ENCODE measurements at regions of chr6 and their contacts with region 1.

Region 1: DNA sequence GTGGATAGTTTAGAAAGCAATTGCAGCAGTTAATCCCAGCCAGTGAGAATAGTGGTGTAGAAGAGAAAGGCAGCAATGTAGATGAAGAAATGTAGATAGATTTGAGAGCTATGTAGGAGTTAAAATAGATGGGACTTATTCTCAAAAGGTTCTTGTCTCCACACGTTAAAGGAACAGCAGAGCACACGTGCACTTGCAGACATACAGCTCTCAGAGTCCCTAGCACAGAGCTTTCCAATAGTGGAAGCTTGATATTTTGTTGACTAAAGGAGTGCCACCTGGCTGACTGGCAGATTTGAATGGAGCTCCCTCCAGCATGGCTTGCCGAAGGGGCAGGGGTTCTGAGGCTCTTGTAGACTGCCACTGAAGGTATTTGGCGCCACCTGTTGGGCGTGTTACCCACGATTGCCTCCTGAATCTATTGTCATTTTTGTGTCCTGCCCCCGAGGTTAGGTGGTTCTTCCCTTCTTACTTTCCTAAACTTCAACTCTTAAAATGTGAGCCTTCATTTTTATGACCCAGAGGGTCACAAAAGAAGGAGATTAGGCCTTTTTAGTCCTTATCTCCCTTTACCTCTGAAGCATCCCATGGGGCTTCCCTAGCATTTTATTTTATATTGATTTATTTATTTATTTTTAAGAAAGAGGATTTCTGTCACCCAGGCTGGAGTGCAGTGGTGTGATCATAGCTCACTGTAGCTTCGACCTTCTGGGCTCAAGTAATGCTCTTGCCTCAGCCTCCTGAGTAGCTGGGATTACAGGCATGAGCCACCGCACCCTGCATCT is 16.4 kb downstream of the BRD2 start:
- DNase-seq: no peak
- ATAC-seq: peak; percentile 83
- H3K4me3 ChIP-seq: no peak overlapping the region
- H3K27ac ChIP-seq: no peak overlapping the region
- H3K4me1 ChIP-seq: peaks cover 7% of the 10 kb centered on the region; the same call in 1 of the 2 replicates
- H3K27me3 ChIP-seq: no peaks in the 10 kb centered on the region
- CTCF ChIP-seq: peak; percentile 79 to 97 (median 89); a peak in 5 of 6 replicates
- EP300 ChIP-seq: no peak
- POLR2A ChIP-seq: no peak
- RAD21 ChIP-seq: peak; percentile 93

Region 2: GRCh38 chr6:31351401-31352309 is 1633.1 kb before region 1 on chr6:
- CTCF ChIA-PET with region 1: no interaction called
- POLR2A ChIA-PET with region 1: no interaction called
- RAD21 ChIA-PET with region 1: no interaction called
- SMC1A ChIA-PET with region 1: no interaction called
- in situ Hi-C with region 1: no loop called
- intact Hi-C with region 1: no loop called
- DNase-seq: no peak
- ATAC-seq: peak; percentile 22
- H3K4me3 ChIP-seq: no peak overlapping the region
- H3K27ac ChIP-seq: no peak overlapping the region
- H3K4me1 ChIP-seq: peaks cover 14% of the 10 kb centered on the region
- H3K27me3 ChIP-seq: no peaks in the 10 kb centered on the region
- CTCF ChIP-seq: no peak
- EP300 ChIP-seq: no peak
- POLR2A ChIP-seq: peak; percentile 47; the same call in 1 of the 2 replicates
- RAD21 ChIP-seq: no peak

Region 3: GRCh38 chr6:32838114-32838958 is 146.5 kb before region 1 on chr6 and contains the start of gene TAP2:
- CTCF ChIA-PET with region 1: interaction called, 36 read pairs
- POLR2A ChIA-PET with region 1: interaction called, 3 read pairs
- RAD21 ChIA-PET with region 1: interaction called, 25 read pairs
- SMC1A ChIA-PET with region 1: interaction called, 50 read pairs
- in situ Hi-C with region 1: no loop called
- intact Hi-C with region 1: loop called (anchors 1 kb)
- DNase-seq: no peak
- ATAC-seq: peak; percentile 85
- H3K4me3 ChIP-seq: peak within 1 kb of the TSS; percentile 95
- H3K27ac ChIP-seq: peak within 1 kb of the TSS; percentile 75
- H3K4me1 ChIP-seq: peaks cover 60% of the 10 kb centered on the region
- H3K27me3 ChIP-seq: no peaks in the 10 kb centered on the region
- CTCF ChIP-seq: peak; percentile 89 to 97 (median 96); a peak in 5 of 6 replicates
- EP300 ChIP-seq: no peak
- POLR2A ChIP-seq: peak; percentile 86
- RAD21 ChIP-seq: peak; percentile 98
- polyA plus RNA-seq, gene TAP2: 5.3 to 6.7 TPM

Region 4: DNA sequence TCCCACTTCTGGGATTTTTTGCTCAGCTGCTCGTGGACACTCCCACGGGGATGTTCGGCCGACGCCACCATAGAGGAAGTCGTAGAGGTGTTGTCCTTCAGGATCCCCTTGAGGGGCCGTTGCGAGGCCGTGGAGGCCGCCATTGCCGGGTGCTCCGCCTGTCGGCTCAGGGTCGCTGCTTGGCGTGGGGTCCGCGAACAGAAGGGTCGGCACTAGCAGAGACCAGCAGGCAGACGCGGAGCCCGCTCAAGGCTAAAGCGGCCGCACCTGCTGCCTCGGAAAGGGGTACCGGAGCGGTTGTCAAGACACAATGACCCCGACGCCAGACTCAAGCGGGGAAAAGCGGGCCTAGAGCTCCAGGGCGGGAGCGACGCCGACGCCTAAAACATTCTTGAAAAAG is 105.1 kb before region 1 on chr6:
- CTCF ChIA-PET with region 1: interaction called, 260 read pairs
- POLR2A ChIA-PET with region 1: no interaction called
- RAD21 ChIA-PET with region 1: interaction called, 104 read pairs
- SMC1A ChIA-PET with region 1: interaction called, 184 read pairs
- in situ Hi-C with region 1: no loop called
- intact Hi-C with region 1: no loop called
- DNase-seq: no peak
- ATAC-seq: no peak
- H3K4me3 ChIP-seq: no peak overlapping the region
- H3K27ac ChIP-seq: no peak overlapping the region
- H3K4me1 ChIP-seq: 0 out of 2 replicates have a peak, but pooled peaks cover 3% of the 10 kb centered on the region
- H3K27me3 ChIP-seq: no peaks in the 10 kb centered on the region; a peak in 1 of 4 replicates
- CTCF ChIP-seq: no peak
- EP300 ChIP-seq: no peak
- POLR2A ChIP-seq: no peak
- RAD21 ChIP-seq: no peak

Region 5: DNA sequence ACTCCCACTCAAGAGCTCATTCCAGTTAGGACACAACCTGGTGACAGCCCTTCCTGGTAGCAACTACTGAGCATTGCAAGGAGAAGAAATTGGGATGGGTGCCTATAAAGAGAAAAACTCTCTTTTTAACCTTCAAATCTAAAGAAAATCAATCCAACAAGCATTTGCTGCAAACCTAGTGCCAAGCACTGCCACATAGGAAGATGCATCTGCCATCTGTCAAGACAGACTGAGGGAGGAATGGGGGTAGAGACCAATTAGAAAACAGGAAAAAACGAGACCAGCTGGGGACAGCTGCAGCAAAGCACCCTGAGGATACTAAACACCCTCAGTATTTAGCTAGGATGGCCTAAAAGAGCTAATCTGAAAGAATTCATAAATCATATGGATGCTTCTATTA is 71.8 kb before region 1 on chr6:
- CTCF ChIA-PET with region 1: interaction called, 36 read pairs
- POLR2A ChIA-PET with region 1: interaction called, 5 read pairs
- RAD21 ChIA-PET with region 1: interaction called, 8 read pairs
- SMC1A ChIA-PET with region 1: interaction called, 12 read pairs
- in situ Hi-C with region 1: no loop called
- intact Hi-C with region 1: no loop called
- DNase-seq: no peak
- ATAC-seq: no peak
- H3K4me3 ChIP-seq: no peak overlapping the region
- H3K27ac ChIP-seq: no peak overlapping the region
- H3K4me1 ChIP-seq: no peaks in the 10 kb centered on the region
- H3K27me3 ChIP-seq: no peaks in the 10 kb centered on the region
- CTCF ChIP-seq: no peak
- EP300 ChIP-seq: no peak
- POLR2A ChIP-seq: no peak
- RAD21 ChIP-seq: no peak

Region 6: GRCh38 chr6:32947552-32948465 is 37.0 kb before region 1 on chr6:
- CTCF ChIA-PET with region 1: interaction called, 367 read pairs
- POLR2A ChIA-PET with region 1: interaction called, 486 read pairs
- RAD21 ChIA-PET with region 1: interaction called, 114 read pairs
- SMC1A ChIA-PET with region 1: interaction called, 195 read pairs
- in situ Hi-C with region 1: no loop called
- intact Hi-C with region 1: loop called (anchors 2 kb)
- DNase-seq: peak; percentile 56
- ATAC-seq: peak; percentile 13; the same call in 2 of the 3 replicates
- H3K4me3 ChIP-seq: peak overlapping the region; percentile 22
- H3K27ac ChIP-seq: peak overlapping the region; percentile 59
- H3K4me1 ChIP-seq: peaks cover 55% of the 10 kb centered on the region
- H3K27me3 ChIP-seq: no peaks in the 10 kb centered on the region
- CTCF ChIP-seq: peak; percentile 69 to 88 (median 82)
- EP300 ChIP-seq: no peak
- POLR2A ChIP-seq: no peak
- RAD21 ChIP-seq: peak; percentile 92

Region 7: GRCh38 chr6:33000055-33000454 is 15.3 kb after region 1 on chr6:
- CTCF ChIA-PET with region 1: interaction called, 21 read pairs
- POLR2A ChIA-PET with region 1: interaction called, 7 read pairs
- RAD21 ChIA-PET with region 1: interaction called, 7 read pairs
- SMC1A ChIA-PET with region 1: interaction called, 11 read pairs
- in situ Hi-C with region 1: no loop called
- intact Hi-C with region 1: no loop called
- DNase-seq: no peak
- ATAC-seq: peak; percentile 89
- H3K4me3 ChIP-seq: no peak overlapping the region
- H3K27ac ChIP-seq: no peak overlapping the region
- H3K4me1 ChIP-seq: peaks cover 7% of the 10 kb centered on the region; the same call in 1 of the 2 replicates
- H3K27me3 ChIP-seq: no peaks in the 10 kb centered on the region
- CTCF ChIP-seq: peak; percentile 51 to 60 (median 53)
- EP300 ChIP-seq: no peak
- POLR2A ChIP-seq: no peak
- RAD21 ChIP-seq: peak; percentile 73

Region 8: GRCh38 chr6:33088931-33089620 is 104.3 kb after region 1 on chr6:
- CTCF ChIA-PET with region 1: no interaction called
- POLR2A ChIA-PET with region 1: no interaction called
- RAD21 ChIA-PET with region 1: no interaction called
- SMC1A ChIA-PET with region 1: no interaction called
- in situ Hi-C with region 1: no loop called
- intact Hi-C with region 1: no loop called
- DNase-seq: no peak
- ATAC-seq: peak; percentile 9; the same call in 2 of the 3 replicates
- H3K4me3 ChIP-seq: no peak overlapping the region
- H3K27ac ChIP-seq: no peak overlapping the region
- H3K4me1 ChIP-seq: no peaks in the 10 kb centered on the region
- H3K27me3 ChIP-seq: no peaks in the 10 kb centered on the region
- CTCF ChIP-seq: no peak
- EP300 ChIP-seq: no peak
- POLR2A ChIP-seq: peak; percentile 61
- RAD21 ChIP-seq: no peak

Region 9: DNA sequence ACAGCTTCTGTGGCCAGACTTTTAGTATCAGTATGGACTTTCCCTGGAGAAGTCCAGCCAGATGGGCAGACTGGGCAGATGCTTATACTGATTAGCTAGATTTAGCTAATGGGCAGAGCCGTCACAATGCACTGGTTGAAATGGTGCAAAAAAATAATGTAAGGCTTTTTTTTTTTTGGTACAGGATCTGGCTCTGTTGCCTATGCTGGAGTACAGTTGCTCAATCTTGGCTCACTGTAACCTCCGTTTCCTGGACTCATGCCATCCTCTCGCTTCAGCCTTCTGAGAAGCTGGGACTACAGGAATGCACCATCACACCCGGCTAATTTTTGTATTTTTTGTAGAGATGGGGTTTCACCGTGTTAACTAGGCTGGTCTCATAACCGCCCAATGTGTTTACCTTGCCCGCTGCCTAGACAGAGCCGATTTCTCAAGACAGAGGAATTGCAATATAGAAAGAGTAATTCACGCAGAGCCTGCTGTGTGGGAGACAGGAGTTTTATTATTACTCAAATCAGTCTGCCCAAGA is 390.4 kb after region 1 on chr6:
- CTCF ChIA-PET with region 1: no interaction called
- POLR2A ChIA-PET with region 1: no interaction called
- RAD21 ChIA-PET with region 1: no interaction called
- SMC1A ChIA-PET with region 1: no interaction called
- in situ Hi-C with region 1: no loop called
- intact Hi-C with region 1: no loop called
- DNase-seq: no peak
- ATAC-seq: no peak
- H3K4me3 ChIP-seq: no peak overlapping the region
- H3K27ac ChIP-seq: no peak overlapping the region
- H3K4me1 ChIP-seq: no peaks in the 10 kb centered on the region
- H3K27me3 ChIP-seq: no peaks in the 10 kb centered on the region
- CTCF ChIP-seq: no peak
- EP300 ChIP-seq: no peak
- POLR2A ChIP-seq: no peak
- RAD21 ChIP-seq: no peak

Measured in GM12878 (cell line).